ENCODE measurements at regions of chr17 and their contacts with region 1.

Region 1: GRCh38 chr17:979538-980405 is at the start of gene NXN:
- DNase-seq: peak; percentile 97
- H3K4me3 ChIP-seq: peak within 1 kb of the TSS; percentile 49 to 89 (median 64)
- H3K27ac ChIP-seq: peak within 1 kb of the TSS; percentile 46 to 83 (median 80)
- H3K4me1 ChIP-seq: peaks cover 13 to 41% (median 28%) of the 10 kb centered on the region in 6 donors
- H3K27me3 ChIP-seq: peaks cover 0 to 44% (median 21%) of the 10 kb centered on the region in 7 donors
- CTCF ChIP-seq: peak in 1 of 11 experiments; percentile 21
- POLR2A ChIP-seq: no peak
- total RNA-seq, gene NXN: 7.2 to 21.4 (median 14.1) TPM

Region 2: GRCh38 chr17:794876-795275 is 184.9 kb before region 1 on chr17:
- intact Hi-C with region 1: loop called (anchors 5 kb)
- DNase-seq: peak; percentile 88
- H3K4me3 ChIP-seq: peak overlapping the region in 4 of 8 donors; percentile 16 to 46 (median 27)
- H3K27ac ChIP-seq: peak overlapping the region in 4 of 8 donors; percentile 9 to 55 (median 29)
- H3K4me1 ChIP-seq: peaks cover 0 to 26% (median 15%) of the 10 kb centered on the region in 6 donors
- H3K27me3 ChIP-seq: no peaks in the 10 kb centered on the region
- CTCF ChIP-seq: peak; percentile 67 to 93 (median 84)
- POLR2A ChIP-seq: no peak

Region 3: GRCh38 chr17:879549-880442 is 100.0 kb before region 1 on chr17:
- intact Hi-C with region 1: loop called (anchors 5 kb)
- DNase-seq: peak; percentile 79
- H3K4me3 ChIP-seq: no peak overlapping the region
- H3K27ac ChIP-seq: peak overlapping the region; percentile 8 to 85 (median 71)
- H3K4me1 ChIP-seq: peaks cover 3 to 33% (median 17%) of the 10 kb centered on the region in 6 donors
- H3K27me3 ChIP-seq: peaks cover 0 to 23% (median 0%) of the 10 kb centered on the region in 7 donors
- CTCF ChIP-seq: peak in 10 of 11 experiments; percentile 16 to 68 (median 49)
- POLR2A ChIP-seq: no peak

Region 4: DNA sequence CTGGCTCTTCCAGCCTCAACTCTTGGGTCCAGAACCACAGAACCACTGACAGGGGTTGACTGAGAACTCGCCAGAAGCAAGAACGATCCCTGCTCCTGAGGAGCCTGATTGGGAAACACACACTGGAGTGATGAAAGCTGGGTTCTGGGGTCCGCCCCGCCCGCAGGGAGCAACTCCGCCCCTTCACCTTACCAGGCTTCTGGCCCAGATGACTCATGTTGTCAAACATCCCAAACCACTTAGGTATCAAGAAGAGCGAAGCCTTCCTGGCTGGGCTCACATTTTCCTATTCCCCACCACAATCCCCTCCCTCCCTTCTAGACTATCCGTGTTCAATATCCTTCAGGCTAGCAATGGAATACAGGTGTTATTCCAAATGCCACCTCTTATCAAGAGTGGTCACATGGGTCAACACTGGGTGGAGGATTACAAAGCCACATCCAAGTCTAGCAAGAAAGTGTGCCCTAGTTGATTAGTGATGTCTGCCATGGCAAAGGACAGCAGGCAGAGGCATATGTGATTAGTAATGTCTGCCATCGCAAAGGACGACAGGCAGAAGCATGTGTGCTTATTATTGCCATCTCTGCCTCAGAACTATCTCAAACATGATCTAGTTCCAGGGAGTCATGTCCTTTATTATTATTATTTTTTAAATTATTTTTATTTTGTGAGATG is 87.6 kb after region 1 on chr17:
- intact Hi-C with region 1: no loop called
- DNase-seq: no peak
- H3K4me3 ChIP-seq: no peak overlapping the region
- H3K27ac ChIP-seq: no peak overlapping the region
- H3K4me1 ChIP-seq: no peaks in the 10 kb centered on the region
- H3K27me3 ChIP-seq: no peaks in the 10 kb centered on the region
- CTCF ChIP-seq: no peak
- POLR2A ChIP-seq: no peak